ENCODE measurements at regions of chr14 and their contacts with region 1.

Region 1: GRCh38 chr14:76977793-76978720 is 50.5 kb downstream of the IRF2BPL start:
- DNase-seq: peak; percentile 85
- H3K4me3 Mint-ChIP-seq: peak overlapping the region; percentile 45
- H3K27ac Mint-ChIP-seq: peak overlapping the region; percentile 90
- H3K4me1 Mint-ChIP-seq: peaks cover 27% of the 10 kb centered on the region
- H3K27me3 Mint-ChIP-seq: no peaks in the 10 kb centered on the region

Region 2: DNA sequence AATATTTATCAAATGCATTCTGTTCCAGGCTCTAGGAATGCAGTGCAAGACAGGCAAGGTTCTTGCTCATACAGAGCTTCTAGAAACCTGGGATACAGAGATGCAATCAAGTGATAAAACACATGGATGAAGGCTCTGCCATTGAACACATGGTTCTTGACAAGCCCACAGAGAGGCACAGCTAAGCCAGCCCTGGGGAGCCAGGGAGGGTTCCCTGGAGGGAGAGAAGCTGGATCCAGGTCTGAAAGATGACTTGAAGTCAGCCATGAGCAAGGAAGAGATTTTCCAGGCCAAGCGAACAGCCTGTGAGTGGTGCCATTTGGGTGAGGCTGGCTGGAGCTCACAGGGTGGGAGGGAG is 15.8 kb before region 1 on chr14:
- intact Hi-C with region 1: loop called (anchors 1 kb)
- DNase-seq: no peak
- H3K4me3 Mint-ChIP-seq: peak overlapping the region; percentile 80
- H3K27ac Mint-ChIP-seq: peak overlapping the region; percentile 80
- H3K4me1 Mint-ChIP-seq: peaks cover 83% of the 10 kb centered on the region
- H3K27me3 Mint-ChIP-seq: peaks cover 26% of the 10 kb centered on the region

Region 3: GRCh38 chr14:77028384-77029231 is 50.6 kb after region 1 on chr14 and contains the start of gene IRF2BPL:
- intact Hi-C with region 1: loop called (anchors 1 kb)
- DNase-seq: peak; percentile 91
- H3K4me3 Mint-ChIP-seq: peak within 1 kb of the TSS; percentile 94
- H3K27ac Mint-ChIP-seq: peak within 1 kb of the TSS; percentile 97
- H3K4me1 Mint-ChIP-seq: peaks cover 57% of the 10 kb centered on the region
- H3K27me3 Mint-ChIP-seq: no peaks in the 10 kb centered on the region
- total RNA-seq, gene IRF2BPL: 24.9 and 26.5 TPM in 2 replicates

Measured in activated T-helper 1 cell treated with anti-CD3 and anti-CD28 coated beads, Interleukin-12 subunit alpha, Interleukin-12 subunit beta, Interleukin-2, Interleukin-4 antibody, amounts not matched to agents 30 ng/mL and 10 ng/mL and 1 ng/mL, durations not matched to agents 14 hours and 24 hours and 36 hours (primary cell).